ENCODE measurements at regions of chr18 and their contacts with region 1.

Region 1: DNA sequence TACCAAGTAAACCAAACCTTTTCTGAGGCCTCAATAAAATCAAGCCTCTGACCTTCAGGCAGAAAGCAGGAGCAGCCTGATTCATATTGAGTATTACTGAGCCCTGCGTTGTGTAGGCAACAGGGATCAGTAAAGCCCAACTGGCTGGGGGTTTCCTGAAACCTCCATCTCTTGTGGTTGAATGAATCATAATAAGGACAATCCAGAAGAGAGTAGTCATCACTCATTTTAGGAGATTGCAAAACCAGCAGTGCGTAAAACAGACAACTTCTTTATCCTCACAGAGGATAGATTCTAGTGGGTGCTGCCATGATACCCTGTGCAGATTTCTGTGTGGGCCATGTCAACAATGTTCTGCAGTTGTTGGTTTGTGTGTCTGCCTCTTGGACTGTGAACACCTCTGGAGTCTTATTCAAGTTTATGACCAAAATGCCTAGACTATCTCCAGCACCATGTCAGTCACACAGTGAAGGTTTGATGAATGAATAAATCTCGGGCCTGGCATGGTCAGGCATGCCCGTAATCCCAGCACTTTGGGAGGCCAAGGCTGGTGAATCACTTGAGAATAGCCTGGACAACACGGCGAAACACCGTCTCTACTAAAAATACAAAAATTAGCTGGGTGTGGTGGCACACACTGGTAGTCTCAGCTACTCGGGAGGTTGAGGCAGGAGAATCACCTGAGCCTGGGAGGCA is 51.8 kb upstream of the RAB27B start:
- DNase-seq: peak; percentile 64 to 97
- H3K4me3 ChIP-seq: peak overlapping the region; percentile 25; the same call in 1 of the 2 replicates
- H3K27ac ChIP-seq: peak overlapping the region; percentile 96
- H3K4me1 ChIP-seq: peaks cover 45% of the 10 kb centered on the region
- H3K27me3 ChIP-seq: no peaks in the 10 kb centered on the region
- CTCF ChIP-seq: no peak

Region 2: GRCh38 chr18:54060343-54061005 is 716.0 kb before region 1 on chr18:
- CTCF ChIA-PET with region 1: no interaction called
- POLR2A ChIA-PET with region 1: no interaction called
- intact Hi-C with region 1: no loop called
- DNase-seq: no peak
- H3K4me3 ChIP-seq: no peak overlapping the region
- H3K27ac ChIP-seq: no peak overlapping the region
- H3K4me1 ChIP-seq: no peaks in the 10 kb centered on the region
- H3K27me3 ChIP-seq: no peaks in the 10 kb centered on the region
- CTCF ChIP-seq: no peak

Region 3: DNA sequence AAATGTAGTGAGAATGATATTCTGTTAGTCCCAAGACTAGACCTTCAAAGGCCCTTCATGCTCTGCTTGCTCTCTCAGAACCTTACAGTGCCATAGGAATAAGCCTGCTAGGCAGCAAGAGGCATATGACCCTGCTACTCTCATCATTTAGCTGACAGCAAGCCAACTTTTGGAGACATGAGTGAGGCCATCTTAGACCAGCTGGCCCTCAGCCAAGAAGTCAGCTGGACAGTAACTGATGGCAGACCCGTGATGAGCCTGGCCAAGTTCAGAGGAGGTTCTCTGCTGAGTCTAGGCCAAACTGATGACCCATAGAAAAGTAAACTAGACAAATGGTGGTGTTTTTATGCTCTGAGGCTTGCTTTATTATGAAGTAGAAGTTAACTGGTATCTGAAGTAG is 336.1 kb before region 1 on chr18:
- CTCF ChIA-PET with region 1: no interaction called
- POLR2A ChIA-PET with region 1: no interaction called
- intact Hi-C with region 1: no loop called
- DNase-seq: no peak
- H3K4me3 ChIP-seq: no peak overlapping the region
- H3K27ac ChIP-seq: no peak overlapping the region
- H3K4me1 ChIP-seq: no peaks in the 10 kb centered on the region
- H3K27me3 ChIP-seq: no peaks in the 10 kb centered on the region
- CTCF ChIP-seq: no peak

Region 4: GRCh38 chr18:54607215-54607934 is 169.1 kb before region 1 on chr18:
- CTCF ChIA-PET with region 1: no interaction called
- POLR2A ChIA-PET with region 1: no interaction called
- intact Hi-C with region 1: loop called (anchors 5 kb)
- DNase-seq: peak; percentile 32 to 97
- H3K4me3 ChIP-seq: peak overlapping the region; percentile 63
- H3K27ac ChIP-seq: peak overlapping the region; percentile 100
- H3K4me1 ChIP-seq: peaks cover 42% of the 10 kb centered on the region
- H3K27me3 ChIP-seq: no peaks in the 10 kb centered on the region
- CTCF ChIP-seq: no peak

Region 5: DNA sequence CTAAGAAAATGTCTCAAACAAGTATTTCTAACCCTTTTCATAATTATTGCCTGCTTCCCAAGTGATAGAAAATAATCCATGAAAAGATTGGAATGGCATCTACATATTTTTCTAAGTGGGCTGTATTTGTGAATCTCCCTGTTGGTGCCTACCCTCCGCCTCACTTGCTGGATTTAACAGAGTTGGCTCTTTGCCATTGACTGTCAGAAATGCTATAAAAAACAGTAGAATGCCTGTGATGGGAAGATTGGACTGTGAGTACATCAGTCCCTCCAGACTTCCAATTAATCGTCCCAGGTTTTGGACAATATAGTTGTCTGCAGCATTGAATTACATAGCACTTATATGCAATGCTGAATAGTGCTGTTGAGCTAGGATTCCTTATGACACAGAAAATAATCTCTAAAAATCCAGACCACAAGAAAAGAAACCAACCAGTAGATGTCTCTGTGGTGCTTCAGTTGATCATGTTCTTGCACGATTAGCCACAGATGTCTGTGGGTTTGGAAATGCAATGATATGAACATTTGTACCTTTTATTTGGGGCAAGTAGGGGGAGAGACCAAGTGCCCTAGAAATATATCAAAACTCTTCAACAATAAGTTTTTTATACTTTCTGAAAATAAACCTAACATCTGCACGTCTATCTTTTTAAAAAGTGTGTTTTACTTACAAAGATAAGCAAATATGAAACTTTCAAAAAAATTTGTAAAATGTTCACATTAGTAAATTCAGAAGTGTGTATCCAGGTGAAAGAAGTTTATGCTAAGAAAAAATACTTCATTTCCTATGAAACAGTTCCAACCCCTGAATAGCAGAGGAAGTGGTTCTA is 96.9 kb before region 1 on chr18:
- CTCF ChIA-PET with region 1: no interaction called
- POLR2A ChIA-PET with region 1: no interaction called
- intact Hi-C with region 1: loop called (anchors 2 kb)
- DNase-seq: peak; percentile 9 to 76
- H3K4me3 ChIP-seq: no peak overlapping the region
- H3K27ac ChIP-seq: no peak overlapping the region
- H3K4me1 ChIP-seq: peaks cover 7% of the 10 kb centered on the region
- H3K27me3 ChIP-seq: no peaks in the 10 kb centered on the region
- CTCF ChIP-seq: peak; percentile 76

Region 6: GRCh38 chr18:54787616-54788015 is 11.2 kb after region 1 on chr18:
- CTCF ChIA-PET with region 1: no interaction called
- POLR2A ChIA-PET with region 1: no interaction called
- intact Hi-C with region 1: no loop called
- DNase-seq: no peak
- H3K4me3 ChIP-seq: no peak overlapping the region
- H3K27ac ChIP-seq: no peak overlapping the region
- H3K4me1 ChIP-seq: 0 out of 2 replicates have a peak, but pooled peaks cover 3% of the 10 kb centered on the region
- H3K27me3 ChIP-seq: no peaks in the 10 kb centered on the region
- CTCF ChIP-seq: no peak

Region 7: GRCh38 chr18:54828281-54828881 is 52.0 kb after region 1 on chr18 and contains the start of gene RAB27B:
- CTCF ChIA-PET with region 1: no interaction called
- POLR2A ChIA-PET with region 1: no interaction called
- intact Hi-C with region 1: loop called (anchors 1 kb)
- DNase-seq: peak; percentile 82 to 93
- H3K4me3 ChIP-seq: peak within 1 kb of the TSS; percentile 95
- H3K27ac ChIP-seq: peak within 1 kb of the TSS; percentile 90
- H3K4me1 ChIP-seq: peaks cover 33% of the 10 kb centered on the region
- H3K27me3 ChIP-seq: no peaks in the 10 kb centered on the region
- CTCF ChIP-seq: no peak
- total RNA-seq, gene RAB27B: 9.9 and 12.7 TPM in 2 replicates

Region 8: DNA sequence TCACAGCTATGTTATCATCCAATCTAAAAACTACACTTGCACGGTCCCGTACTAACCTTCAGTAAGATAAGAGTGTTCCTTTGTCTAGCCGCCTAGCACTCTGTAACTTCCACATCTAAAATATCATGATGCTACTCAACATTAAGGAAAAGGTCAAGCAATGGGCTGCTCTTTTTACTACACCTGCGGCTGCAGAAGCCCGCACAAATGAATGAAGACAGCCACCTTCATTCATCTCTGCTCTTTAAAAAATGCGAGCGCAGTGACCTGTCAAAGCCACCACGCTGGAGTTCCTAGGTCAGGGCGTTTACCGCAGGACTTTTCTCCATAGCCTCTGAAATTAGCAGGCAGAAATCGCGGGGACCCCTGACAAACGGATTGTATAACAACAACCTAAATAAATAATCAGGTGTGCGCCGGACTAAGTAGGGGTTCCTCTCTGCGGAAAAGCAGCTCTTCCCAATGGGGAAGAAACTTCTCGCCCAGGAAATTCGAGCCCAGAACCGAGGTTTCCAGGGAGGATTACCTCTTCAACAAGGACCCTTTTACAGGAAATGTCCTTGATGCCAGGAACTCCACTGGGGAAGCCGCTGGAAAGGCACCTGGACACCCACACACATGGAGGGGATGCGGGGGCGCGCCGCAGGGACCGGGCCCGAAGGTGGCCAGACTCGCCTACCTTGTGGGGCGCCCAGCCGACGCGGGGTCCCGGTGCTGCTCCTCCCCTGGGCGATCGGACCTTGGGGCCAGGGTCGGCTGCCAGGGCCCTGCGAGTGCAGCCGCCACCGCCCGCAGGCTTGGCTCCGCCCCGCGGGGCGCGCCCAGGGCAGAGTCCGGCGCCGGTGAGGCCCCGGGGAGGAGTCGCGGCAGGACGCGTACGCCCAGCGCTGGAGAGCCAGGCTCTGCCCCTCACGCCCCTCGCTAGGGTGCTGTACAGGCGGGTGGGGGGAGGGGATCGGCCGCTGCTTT is 182.5 kb after region 1 on chr18 and contains the start of gene CCDC68:
- CTCF ChIA-PET with region 1: no interaction called
- POLR2A ChIA-PET with region 1: no interaction called
- intact Hi-C with region 1: loop called (anchors 5 kb)
- DNase-seq: peak; percentile 50 to 64
- H3K4me3 ChIP-seq: peak within 1 kb of the TSS; percentile 77
- H3K27ac ChIP-seq: peak within 1 kb of the TSS; percentile 13
- H3K4me1 ChIP-seq: peaks cover 18% of the 10 kb centered on the region
- H3K27me3 ChIP-seq: no peaks in the 10 kb centered on the region
- CTCF ChIP-seq: no peak
- total RNA-seq, gene CCDC68: 2.7 and 2.9 TPM in 2 replicates

Region 9: GRCh38 chr18:54983041-54983686 is 206.7 kb after region 1 on chr18:
- CTCF ChIA-PET with region 1: no interaction called
- POLR2A ChIA-PET with region 1: no interaction called
- intact Hi-C with region 1: loop called (anchors 2 kb)
- DNase-seq: peak in 1 of 2 experiments; percentile 71
- H3K4me3 ChIP-seq: no peak overlapping the region
- H3K27ac ChIP-seq: no peak overlapping the region
- H3K4me1 ChIP-seq: peaks cover 6% of the 10 kb centered on the region; the same call in 1 of the 2 replicates
- H3K27me3 ChIP-seq: no peaks in the 10 kb centered on the region
- CTCF ChIP-seq: peak; percentile 86

Region 10: GRCh38 chr18:55031979-55032378 is 255.5 kb after region 1 on chr18:
- CTCF ChIA-PET with region 1: no interaction called
- POLR2A ChIA-PET with region 1: interaction called, 4 read pairs
- intact Hi-C with region 1: loop called (anchors 5 kb)
- DNase-seq: peak; percentile 50 to 81
- H3K4me3 ChIP-seq: no peak overlapping the region
- H3K27ac ChIP-seq: peak overlapping the region; percentile 39
- H3K4me1 ChIP-seq: no peaks in the 10 kb centered on the region
- H3K27me3 ChIP-seq: no peaks in the 10 kb centered on the region
- CTCF ChIP-seq: no peak